ENCODE measurements at regions of chr7 and their contacts with region 1.

Region 1: GRCh38 chr7:155153676-155154075 is 83.6 kb downstream of the HTR5A start:
- DNase-seq: no peak
- H3K4me3 ChIP-seq: no peak overlapping the region
- H3K27ac ChIP-seq: no peak overlapping the region
- H3K4me1 ChIP-seq: no peaks in the 10 kb centered on the region
- H3K27me3 ChIP-seq: no peaks in the 10 kb centered on the region
- CTCF ChIP-seq: no peak
- POLR2A ChIP-seq: no peak

Region 2: DNA sequence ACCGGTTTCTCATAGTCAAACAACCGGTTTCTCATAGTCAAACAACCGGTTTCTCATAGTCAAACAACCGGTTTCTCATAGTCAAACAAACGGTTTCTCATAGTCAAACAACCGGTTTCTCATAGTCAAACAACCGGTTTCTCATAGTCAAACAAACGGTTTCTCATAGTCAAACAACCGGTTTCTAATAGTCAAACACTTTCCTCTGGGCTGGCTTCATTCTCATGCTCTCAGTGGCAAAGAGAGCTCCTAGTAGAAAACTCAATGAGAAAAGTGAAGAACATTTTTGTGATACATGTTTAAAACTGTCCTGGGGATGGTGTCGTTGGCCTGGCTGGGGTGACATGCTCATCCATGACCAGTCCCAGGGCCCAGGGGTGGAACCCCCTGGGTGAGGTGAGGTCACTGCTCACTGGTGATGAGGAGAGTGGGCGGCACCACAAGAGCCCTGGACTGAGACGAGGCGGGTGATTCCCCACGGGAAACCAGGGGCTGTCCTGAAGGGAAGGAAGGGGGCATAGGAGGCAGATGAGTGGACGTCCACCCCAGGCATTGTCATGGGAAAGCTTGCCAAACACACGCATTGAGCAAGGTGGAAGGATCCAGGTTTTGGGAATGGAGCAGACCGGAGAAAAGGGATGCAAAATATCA is 29.1 kb before region 1 on chr7:
- intact Hi-C with region 1: loop called (anchors 2 kb)
- DNase-seq: no peak
- H3K4me3 ChIP-seq: no peak overlapping the region
- H3K27ac ChIP-seq: no peak overlapping the region
- H3K4me1 ChIP-seq: no peaks in the 10 kb centered on the region
- H3K27me3 ChIP-seq: no peaks in the 10 kb centered on the region
- CTCF ChIP-seq: no peak
- POLR2A ChIP-seq: no peak

Measured in uterus (tissue), 4 donors.